A549 (cell line): ENCODE measurements at regions of chr12 and their contacts with region 1.

Region 1: GRCh38 chr12:63802012-63802608 is 22.4 kb downstream of the RXYLT1 start:
- DNase-seq: peak; percentile 33 to 53
- ATAC-seq: no peak
- H3K4me3 ChIP-seq: no peak overlapping the region
- H3K27ac ChIP-seq: no peak overlapping the region
- H3K4me1 ChIP-seq: peaks cover 32% of the 10 kb centered on the region
- CTCF ChIP-seq: peak; percentile 78
- EP300 ChIP-seq: no peak
- POLR2A ChIP-seq: no peak
- RAD21 ChIP-seq: peak; percentile 84 to 86

Region 2: DNA sequence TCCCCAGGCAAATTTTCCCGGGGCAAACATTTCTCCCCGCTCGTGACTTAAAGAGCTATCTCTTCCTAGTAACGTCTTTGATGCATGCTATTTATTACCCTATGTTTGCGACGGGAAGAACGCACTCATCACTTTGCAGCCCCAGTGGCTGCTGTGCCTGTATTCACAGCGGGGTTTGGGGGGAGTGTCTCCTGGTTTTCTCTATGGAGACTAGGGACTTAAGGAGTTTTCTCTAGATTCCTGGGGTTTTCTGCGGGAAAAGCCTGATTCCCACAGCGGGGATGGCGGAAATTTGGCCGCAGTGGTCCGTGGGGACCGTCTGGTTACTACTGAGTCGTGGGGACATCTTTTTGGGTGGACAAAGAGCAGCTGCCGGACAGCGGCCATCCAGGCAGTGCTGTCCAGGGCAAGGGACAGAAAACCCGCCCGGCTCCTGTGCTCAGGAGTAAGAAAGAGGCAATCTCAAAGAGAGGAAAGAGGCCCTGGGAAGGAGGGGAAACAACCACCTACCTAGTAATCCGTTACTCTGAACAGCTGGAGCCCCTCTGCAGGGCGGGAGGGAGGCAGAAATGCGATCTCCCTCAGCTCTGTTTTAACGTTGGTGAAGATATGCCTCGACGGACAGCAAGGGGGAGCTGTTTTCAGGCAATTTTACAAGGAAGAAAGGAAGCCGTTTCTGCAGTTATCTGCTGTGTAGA is 650.3 kb before region 1 on chr12:
- CTCF ChIA-PET with region 1: interaction called, 10 read pairs
- POLR2A ChIA-PET with region 1: no interaction called
- DNase-seq: peak; percentile 64 to 69
- ATAC-seq: peak; percentile 79 to 92
- H3K4me3 ChIP-seq: peak overlapping the region; percentile 49
- H3K27ac ChIP-seq: no peak overlapping the region
- H3K4me1 ChIP-seq: peaks cover 12% of the 10 kb centered on the region; the same call in 2 of the 3 replicates
- CTCF ChIP-seq: peak; percentile 75
- EP300 ChIP-seq: no peak
- POLR2A ChIP-seq: no peak
- RAD21 ChIP-seq: peak; percentile 51 to 69

Region 3: GRCh38 chr12:63420206-63420644 is 381.9 kb before region 1 on chr12:
- CTCF ChIA-PET with region 1: interaction called, 11 read pairs
- POLR2A ChIA-PET with region 1: no interaction called
- DNase-seq: peak; percentile 49 to 76
- ATAC-seq: peak; percentile 84 to 98
- H3K4me3 ChIP-seq: no peak overlapping the region
- H3K27ac ChIP-seq: no peak overlapping the region
- H3K4me1 ChIP-seq: no peaks in the 10 kb centered on the region
- CTCF ChIP-seq: peak; percentile 74
- EP300 ChIP-seq: no peak
- POLR2A ChIP-seq: no peak
- RAD21 ChIP-seq: peak; percentile 67 to 79

Region 4: DNA sequence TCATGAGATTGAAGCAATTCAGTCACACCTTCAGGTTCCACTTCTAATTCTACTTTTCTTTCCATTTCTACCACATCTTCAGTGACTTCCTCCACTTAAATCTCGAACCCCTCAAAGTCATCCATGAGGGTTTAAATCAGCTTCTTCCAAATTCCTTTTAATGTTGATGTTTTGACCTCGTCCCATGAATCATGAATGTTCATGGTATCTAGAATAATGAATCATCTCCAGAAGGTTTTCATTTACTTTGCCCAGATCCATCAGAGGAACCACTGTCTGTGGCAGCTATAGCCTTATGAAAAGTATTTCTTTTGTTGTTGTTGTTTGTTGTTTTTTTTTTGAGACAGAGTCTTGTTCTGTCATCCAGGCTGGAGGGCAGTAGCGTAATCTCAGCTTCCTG is 14.8 kb before region 1 on chr12:
- CTCF ChIA-PET with region 1: interaction called, 19 read pairs
- POLR2A ChIA-PET with region 1: no interaction called
- DNase-seq: no peak
- ATAC-seq: no peak
- H3K4me3 ChIP-seq: no peak overlapping the region
- H3K27ac ChIP-seq: no peak overlapping the region
- H3K4me1 ChIP-seq: no peaks in the 10 kb centered on the region
- CTCF ChIP-seq: no peak
- EP300 ChIP-seq: no peak
- POLR2A ChIP-seq: no peak
- RAD21 ChIP-seq: no peak

Region 5: DNA sequence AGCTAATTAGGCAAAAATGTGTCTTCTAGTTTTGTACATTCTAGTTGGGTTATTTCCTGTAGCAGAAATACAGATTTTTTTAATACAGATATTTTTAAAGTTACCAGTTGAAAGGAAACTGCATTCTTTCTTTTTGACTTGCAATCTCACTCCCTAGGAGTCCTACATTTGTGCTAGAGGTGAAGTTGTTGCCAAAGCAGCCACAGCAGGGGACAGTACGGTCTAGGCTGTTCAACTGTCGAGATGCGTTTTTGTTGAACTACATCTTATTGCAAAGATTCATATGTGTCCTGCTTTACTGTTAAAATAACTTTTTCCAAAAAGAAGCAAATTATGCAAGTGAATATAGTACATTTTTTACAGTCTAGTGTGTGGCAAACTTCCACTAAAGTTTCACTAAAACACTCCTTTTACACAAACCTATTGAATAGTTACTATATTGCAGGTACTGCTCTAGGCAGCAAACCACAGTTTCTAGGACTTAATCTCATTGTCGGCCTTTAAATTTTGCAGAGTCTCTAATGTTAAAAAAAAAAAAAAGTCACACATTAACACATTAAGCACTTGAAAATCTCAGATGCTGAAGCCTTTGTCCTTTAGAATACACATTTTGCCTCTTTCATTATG is 12.1 kb after region 1 on chr12:
- CTCF ChIA-PET with region 1: interaction called, 22 read pairs
- POLR2A ChIA-PET with region 1: no interaction called
- DNase-seq: no peak
- ATAC-seq: no peak
- H3K4me3 ChIP-seq: no peak overlapping the region
- H3K27ac ChIP-seq: no peak overlapping the region
- H3K4me1 ChIP-seq: peaks cover 16% of the 10 kb centered on the region; the same call in 2 of the 3 replicates
- CTCF ChIP-seq: no peak
- EP300 ChIP-seq: no peak
- POLR2A ChIP-seq: no peak
- RAD21 ChIP-seq: no peak